ENCODE measurements at regions of chr22 and their contacts with region 1.

Region 1: GRCh38 chr22:40922484-40923303 is 28.5 kb upstream of the RBX1 start:
- DNase-seq: peak; percentile 21
- H3K4me3 Mint-ChIP-seq: no peak overlapping the region
- H3K27ac Mint-ChIP-seq: peak overlapping the region; percentile 2
- H3K4me1 Mint-ChIP-seq: peaks cover 4% of the 10 kb centered on the region
- H3K27me3 Mint-ChIP-seq: no peaks in the 10 kb centered on the region

Region 2: GRCh38 chr22:40862537-40862936 is 60.2 kb before region 1 on chr22:
- CTCF ChIA-PET with region 1: no interaction called
- DNase-seq: no peak
- H3K4me3 Mint-ChIP-seq: no peak overlapping the region
- H3K27ac Mint-ChIP-seq: no peak overlapping the region
- H3K4me1 Mint-ChIP-seq: peaks cover 26% of the 10 kb centered on the region
- H3K27me3 Mint-ChIP-seq: no peaks in the 10 kb centered on the region

Region 3: GRCh38 chr22:40950962-40951794 is 28.5 kb after region 1 on chr22 and contains the start of gene RBX1:
- CTCF ChIA-PET with region 1: interaction called, 12 read pairs
- DNase-seq: peak; percentile 99
- H3K4me3 Mint-ChIP-seq: peak within 1 kb of the TSS; percentile 98
- H3K27ac Mint-ChIP-seq: peak within 1 kb of the TSS; percentile 99
- H3K4me1 Mint-ChIP-seq: peaks cover 35% of the 10 kb centered on the region
- H3K27me3 Mint-ChIP-seq: peaks cover 6% of the 10 kb centered on the region

Region 4: DNA sequence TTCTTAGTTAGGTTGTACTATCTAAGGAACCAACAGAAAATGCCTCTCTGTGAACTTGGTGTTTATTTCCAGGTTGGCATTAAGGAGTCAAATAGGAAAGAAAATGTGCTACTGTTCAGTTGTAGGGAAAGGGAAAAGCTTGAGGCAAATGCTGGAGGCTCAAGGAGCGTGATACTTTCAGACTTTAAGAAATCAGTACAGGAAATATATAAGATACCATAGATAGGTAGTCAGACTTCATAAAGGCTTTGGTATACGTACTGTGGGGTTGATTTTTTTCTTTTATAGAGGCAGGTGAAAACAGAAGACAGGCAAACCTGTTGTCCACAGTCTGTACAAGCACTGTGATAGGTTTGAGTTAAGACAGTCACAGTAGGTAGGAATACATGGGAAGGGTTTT is 200.5 kb after region 1 on chr22:
- CTCF ChIA-PET with region 1: interaction called, 13 read pairs
- DNase-seq: no peak
- H3K4me3 Mint-ChIP-seq: no peak overlapping the region
- H3K27ac Mint-ChIP-seq: no peak overlapping the region
- H3K4me1 Mint-ChIP-seq: no peaks in the 10 kb centered on the region
- H3K27me3 Mint-ChIP-seq: no peaks in the 10 kb centered on the region

Region 5: GRCh38 chr22:41217553-41218157 is 295.0 kb after region 1 on chr22:
- CTCF ChIA-PET with region 1: interaction called, 11 read pairs
- DNase-seq: peak; percentile 72
- H3K4me3 Mint-ChIP-seq: peak overlapping the region; percentile 38
- H3K27ac Mint-ChIP-seq: peak overlapping the region; percentile 78
- H3K4me1 Mint-ChIP-seq: peaks cover 31% of the 10 kb centered on the region
- H3K27me3 Mint-ChIP-seq: no peaks in the 10 kb centered on the region

Region 6: GRCh38 chr22:41237707-41238569 is 315.2 kb after region 1 on chr22:
- CTCF ChIA-PET with region 1: interaction called, 113 read pairs
- DNase-seq: peak; percentile 92
- H3K4me3 Mint-ChIP-seq: peak overlapping the region; percentile 71
- H3K27ac Mint-ChIP-seq: no peak overlapping the region
- H3K4me1 Mint-ChIP-seq: peaks cover 6% of the 10 kb centered on the region
- H3K27me3 Mint-ChIP-seq: peaks cover 15% of the 10 kb centered on the region